ENCODE measurements at regions of chr10 and their contacts with region 1.

Region 1: DNA sequence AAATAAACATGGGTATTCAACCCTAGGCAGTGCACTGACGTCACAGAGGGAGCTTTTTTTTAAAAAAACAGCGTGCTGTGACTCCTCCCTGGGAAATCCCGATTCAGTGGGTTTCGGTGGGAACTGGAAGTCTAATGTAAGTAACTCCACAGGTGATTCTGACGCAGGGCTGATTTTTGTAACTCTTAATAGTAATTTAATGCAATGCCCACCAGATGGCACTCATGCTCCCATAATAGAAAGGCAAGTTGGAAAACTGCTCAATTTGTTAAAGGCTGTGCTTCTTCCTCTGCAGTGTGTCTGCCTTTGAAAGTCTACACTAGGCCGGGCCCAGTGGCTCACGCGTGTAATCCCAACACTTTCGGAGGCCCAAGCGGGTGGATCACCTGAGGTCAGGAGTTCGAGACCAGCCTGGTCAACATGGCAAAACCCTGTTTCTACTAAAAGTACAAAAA is 10.9 kb upstream of the RSU1 start:
- DNase-seq: peak; percentile 45 to 52
- ATAC-seq: peak; percentile 50

Region 2: GRCh38 chr10:16632996-16633395 is 195.1 kb before region 1 on chr10:
- intact Hi-C with region 1: no loop called
- DNase-seq: no peak
- ATAC-seq: no peak

Region 3: GRCh38 chr10:17257466-17258321 is 429.6 kb after region 1 on chr10:
- intact Hi-C with region 1: loop called in 1 of 2 experiments (anchors 5 kb)
- DNase-seq: peak; percentile 30 to 31
- ATAC-seq: peak; percentile 85

Region 4: DNA sequence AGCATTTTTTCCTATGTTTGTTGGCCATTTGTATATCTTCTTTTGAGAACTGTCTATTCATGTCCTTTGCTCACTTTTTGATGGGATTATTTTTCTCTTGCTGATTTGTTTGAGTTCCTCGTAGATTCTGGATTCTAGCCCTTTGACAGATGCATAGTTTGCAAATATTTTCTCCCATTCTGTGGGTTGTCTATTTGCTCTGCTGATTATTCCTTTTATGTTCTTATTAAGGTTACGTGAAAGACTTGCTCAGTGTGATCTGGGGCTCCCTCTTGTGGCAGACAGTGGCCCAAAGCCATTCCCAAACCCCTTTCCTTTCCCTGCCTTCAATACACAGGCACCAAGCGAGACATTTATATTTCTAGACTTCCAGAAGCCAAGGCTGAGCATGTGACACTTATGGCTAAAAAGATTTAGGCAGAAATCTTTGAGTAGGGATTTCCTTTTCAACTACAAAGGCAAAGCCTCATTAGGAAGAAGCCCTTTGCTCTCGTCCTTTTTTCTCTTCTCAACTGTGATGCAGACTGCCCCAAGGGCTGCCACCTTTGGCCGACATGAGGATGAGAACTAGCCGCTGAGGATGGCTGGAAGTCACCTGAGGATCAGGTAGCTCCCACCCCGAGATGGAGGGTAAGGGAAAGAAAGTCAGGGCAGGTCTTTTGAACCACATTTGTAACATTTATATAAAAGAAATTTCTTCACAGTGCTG is 602.7 kb after region 1 on chr10:
- intact Hi-C with region 1: loop called in 1 of 2 experiments (anchors 10 kb)
- DNase-seq: peak; percentile 45 to 78
- ATAC-seq: peak; percentile 77

Measured in left colon (tissue), 2 donors.